ENCODE measurements at regions of chr1 and their contacts with region 1.

Region 1: GRCh38 chr1:6245086-6245868 is 1.3 kb downstream of the HES3 start:
- DNase-seq: peak; percentile 66 to 87 (median 82)
- H3K4me3 ChIP-seq: no peak overlapping the region
- H3K27ac ChIP-seq: no peak overlapping the region
- H3K4me1 ChIP-seq: peaks cover 22% of the 10 kb centered on the region
- H3K27me3 ChIP-seq: peaks cover 15% of the 10 kb centered on the region
- CTCF ChIP-seq: peak; percentile 69 to 81 (median 73)
- EP300 ChIP-seq: no peak
- POLR2A ChIP-seq: no peak

Region 2: GRCh38 chr1:6041432-6042062 is 203.7 kb before region 1 on chr1:
- intact Hi-C with region 1: loop called in 1 of 4 experiments (anchors 10 kb)
- DNase-seq: peak; percentile 23 to 76 (median 45)
- H3K4me3 ChIP-seq: no peak overlapping the region
- H3K27ac ChIP-seq: no peak overlapping the region
- H3K4me1 ChIP-seq: peaks cover 3% of the 10 kb centered on the region
- H3K27me3 ChIP-seq: no peaks in the 10 kb centered on the region
- CTCF ChIP-seq: peak in 1 of 3 donors; percentile 14
- EP300 ChIP-seq: no peak
- POLR2A ChIP-seq: no peak

Region 3: GRCh38 chr1:6343506-6344405 is 98.5 kb after region 1 on chr1:
- intact Hi-C with region 1: loop called (anchors 2 to 5 kb)
- DNase-seq: peak; percentile 49 to 80 (median 74)
- H3K4me3 ChIP-seq: no peak overlapping the region
- H3K27ac ChIP-seq: no peak overlapping the region
- H3K4me1 ChIP-seq: no peaks in the 10 kb centered on the region
- H3K27me3 ChIP-seq: no peaks in the 10 kb centered on the region
- CTCF ChIP-seq: peak; percentile 70 to 84 (median 79)
- EP300 ChIP-seq: no peak
- POLR2A ChIP-seq: no peak

Region 4: DNA sequence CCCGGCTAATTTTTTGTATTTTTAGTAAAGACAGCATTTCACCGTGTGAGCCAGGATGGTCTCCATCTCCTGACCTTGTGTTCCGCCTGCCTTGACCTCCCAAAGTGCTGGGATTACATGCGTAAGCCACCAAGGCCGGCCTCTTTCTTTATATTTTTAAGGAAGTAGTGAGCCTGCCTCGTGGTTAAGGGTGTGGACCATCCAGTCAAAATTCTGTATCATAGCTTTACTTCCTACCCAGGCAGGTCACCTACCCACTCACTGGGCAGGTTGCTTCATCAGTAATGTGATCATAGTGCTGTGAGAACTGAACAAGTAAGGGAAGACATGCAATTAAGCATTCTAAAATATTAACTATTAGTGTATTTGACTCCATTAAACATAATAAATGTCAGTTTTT is 156.4 kb after region 1 on chr1:
- intact Hi-C with region 1: loop called (anchors 2 to 10 kb)
- DNase-seq: no peak
- H3K4me3 ChIP-seq: no peak overlapping the region
- H3K27ac ChIP-seq: no peak overlapping the region
- H3K4me1 ChIP-seq: no peaks in the 10 kb centered on the region
- H3K27me3 ChIP-seq: no peaks in the 10 kb centered on the region
- CTCF ChIP-seq: no peak
- EP300 ChIP-seq: no peak
- POLR2A ChIP-seq: no peak

Region 5: GRCh38 chr1:6409053-6409452 is 163.8 kb after region 1 on chr1:
- intact Hi-C with region 1: loop called (anchors 2 to 10 kb)
- DNase-seq: no peak
- H3K4me3 ChIP-seq: no peak overlapping the region
- H3K27ac ChIP-seq: no peak overlapping the region
- H3K4me1 ChIP-seq: no peaks in the 10 kb centered on the region
- H3K27me3 ChIP-seq: no peaks in the 10 kb centered on the region
- CTCF ChIP-seq: no peak
- EP300 ChIP-seq: no peak
- POLR2A ChIP-seq: no peak

Region 6: DNA sequence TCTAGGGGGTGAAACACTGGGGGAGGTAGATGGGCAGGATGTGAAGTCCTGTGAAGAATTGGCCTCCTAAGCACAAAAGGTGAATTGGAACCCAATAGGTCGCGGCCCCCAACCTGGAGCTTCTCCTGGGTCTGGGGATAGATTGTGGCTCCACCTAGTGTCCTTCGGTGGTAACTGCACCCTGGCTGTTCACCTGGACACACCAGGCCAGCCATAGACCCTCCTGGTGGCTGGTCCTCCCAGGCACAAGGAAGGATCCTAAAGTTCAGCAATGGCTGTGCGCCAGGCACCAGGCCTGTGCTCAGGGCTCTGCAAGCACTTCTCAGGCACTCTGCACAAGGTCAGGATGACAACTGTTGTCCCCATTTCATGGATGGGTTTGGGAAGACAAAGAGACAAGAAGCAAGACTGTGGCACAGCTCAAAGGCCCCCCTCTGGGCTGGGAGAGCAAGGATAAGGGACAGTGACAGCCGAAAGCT is 192.8 kb after region 1 on chr1:
- intact Hi-C with region 1: loop called in 1 of 4 experiments (anchors 10 kb)
- DNase-seq: peak; percentile 53 to 71 (median 68)
- H3K4me3 ChIP-seq: no peak overlapping the region
- H3K27ac ChIP-seq: no peak overlapping the region
- H3K4me1 ChIP-seq: peaks cover 1% of the 10 kb centered on the region
- H3K27me3 ChIP-seq: no peaks in the 10 kb centered on the region
- CTCF ChIP-seq: peak; percentile 59 to 71 (median 61)
- EP300 ChIP-seq: no peak
- POLR2A ChIP-seq: no peak

Region 7: GRCh38 chr1:6538956-6539355 is 293.7 kb after region 1 on chr1:
- intact Hi-C with region 1: no loop called
- DNase-seq: no peak
- H3K4me3 ChIP-seq: no peak overlapping the region
- H3K27ac ChIP-seq: no peak overlapping the region
- H3K4me1 ChIP-seq: peaks cover 2% of the 10 kb centered on the region
- H3K27me3 ChIP-seq: no peaks in the 10 kb centered on the region
- CTCF ChIP-seq: no peak
- EP300 ChIP-seq: no peak
- POLR2A ChIP-seq: no peak

Measured in ovary (tissue), 10 donors.